Activated T-helper 1 cell treated with anti-CD3 and anti-CD28 coated beads, Interleukin-12 subunit alpha, Interleukin-12 subunit beta, Interleukin-2, Interleukin-4 antibody, amounts not matched to agents 30 ng/mL and 10 ng/mL and 1 ng/mL, durations not matched to agents 14 hours and 24 hours and 36 hours (primary cell): ENCODE measurements at regions of chr6 and their contacts with region 1.

Region 1: GRCh38 chr6:149094156-149094555 is 223.4 kb upstream of the TAB2 start:
- DNase-seq: no peak
- H3K4me3 Mint-ChIP-seq: peak overlapping the region; percentile 64
- H3K27ac Mint-ChIP-seq: peak overlapping the region; percentile 88
- H3K4me1 Mint-ChIP-seq: peaks cover 78% of the 10 kb centered on the region
- H3K27me3 Mint-ChIP-seq: no peaks in the 10 kb centered on the region

Region 2: DNA sequence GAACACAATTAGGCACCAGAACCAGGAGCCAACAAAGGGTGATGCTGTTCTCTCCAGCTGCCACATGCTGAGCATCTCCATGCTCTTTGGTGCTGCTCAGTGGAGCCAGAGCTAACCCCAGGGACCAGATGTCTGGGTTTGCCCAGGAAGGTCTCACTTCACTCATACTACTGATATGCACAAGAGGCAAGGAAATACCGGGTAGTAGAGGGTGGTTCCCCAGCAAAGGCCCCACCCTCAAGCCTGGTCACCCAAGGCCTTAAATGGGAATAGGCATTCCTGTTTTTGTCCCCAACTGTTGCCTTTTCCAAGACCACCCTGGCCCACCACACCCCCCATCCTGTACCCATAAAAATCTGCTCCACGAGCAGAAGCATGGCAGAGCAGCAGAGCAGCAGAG is 18.8 kb after region 1 on chr6:
- intact Hi-C with region 1: loop called (anchors 2 kb)
- DNase-seq: no peak
- H3K4me3 Mint-ChIP-seq: peak overlapping the region; percentile 46
- H3K27ac Mint-ChIP-seq: peak overlapping the region; percentile 89
- H3K4me1 Mint-ChIP-seq: peaks cover 92% of the 10 kb centered on the region
- H3K27me3 Mint-ChIP-seq: no peaks in the 10 kb centered on the region

Region 3: DNA sequence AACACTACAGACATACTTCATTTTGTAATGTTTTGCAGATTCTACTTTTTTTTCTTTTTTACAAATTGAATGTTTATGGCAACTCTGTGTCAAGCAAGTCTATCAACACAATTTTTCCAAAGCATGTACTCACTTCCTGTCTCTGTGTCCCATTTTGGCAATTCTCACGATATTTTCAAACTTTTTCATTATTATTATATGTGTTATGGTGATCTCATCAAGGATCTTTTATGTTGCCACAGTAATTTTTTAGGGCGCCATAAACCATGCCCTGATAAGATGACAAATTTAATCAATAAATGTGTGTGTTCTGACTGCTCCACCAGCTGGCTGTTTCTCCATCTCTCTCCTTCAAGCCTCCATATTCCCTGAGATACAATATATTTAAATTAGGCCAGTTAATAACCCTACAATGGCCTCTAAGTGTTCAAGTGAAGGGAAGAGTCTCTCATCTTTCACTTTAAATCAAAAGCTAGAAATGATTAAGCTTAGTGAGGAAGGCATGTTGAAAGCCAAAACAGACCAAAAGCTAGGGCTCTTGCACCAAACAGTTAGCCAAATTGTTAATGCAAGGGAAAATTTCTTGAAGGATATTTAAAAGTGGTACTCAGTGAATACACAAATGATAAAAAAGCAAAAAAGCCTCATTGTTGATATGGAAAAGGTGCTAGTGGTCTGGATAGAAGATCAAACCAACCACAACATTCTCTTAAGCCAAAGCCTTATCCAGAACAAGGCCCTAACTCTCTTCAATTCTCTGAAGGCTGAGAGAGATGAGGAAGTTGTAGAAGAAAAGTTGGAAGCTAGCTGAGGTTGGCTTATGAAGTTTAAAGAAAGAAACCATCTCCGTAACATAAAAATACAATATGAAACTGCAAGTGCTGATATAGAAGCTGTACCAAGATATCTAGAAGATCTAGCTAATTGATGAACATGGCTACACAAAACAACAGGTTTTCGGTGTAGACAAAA is 29.0 kb after region 1 on chr6:
- intact Hi-C with region 1: loop called (anchors 1 kb)
- DNase-seq: no peak
- H3K4me3 Mint-ChIP-seq: peak overlapping the region; percentile 48
- H3K27ac Mint-ChIP-seq: peak overlapping the region; percentile 82
- H3K4me1 Mint-ChIP-seq: peaks cover 52% of the 10 kb centered on the region
- H3K27me3 Mint-ChIP-seq: no peaks in the 10 kb centered on the region

Region 4: DNA sequence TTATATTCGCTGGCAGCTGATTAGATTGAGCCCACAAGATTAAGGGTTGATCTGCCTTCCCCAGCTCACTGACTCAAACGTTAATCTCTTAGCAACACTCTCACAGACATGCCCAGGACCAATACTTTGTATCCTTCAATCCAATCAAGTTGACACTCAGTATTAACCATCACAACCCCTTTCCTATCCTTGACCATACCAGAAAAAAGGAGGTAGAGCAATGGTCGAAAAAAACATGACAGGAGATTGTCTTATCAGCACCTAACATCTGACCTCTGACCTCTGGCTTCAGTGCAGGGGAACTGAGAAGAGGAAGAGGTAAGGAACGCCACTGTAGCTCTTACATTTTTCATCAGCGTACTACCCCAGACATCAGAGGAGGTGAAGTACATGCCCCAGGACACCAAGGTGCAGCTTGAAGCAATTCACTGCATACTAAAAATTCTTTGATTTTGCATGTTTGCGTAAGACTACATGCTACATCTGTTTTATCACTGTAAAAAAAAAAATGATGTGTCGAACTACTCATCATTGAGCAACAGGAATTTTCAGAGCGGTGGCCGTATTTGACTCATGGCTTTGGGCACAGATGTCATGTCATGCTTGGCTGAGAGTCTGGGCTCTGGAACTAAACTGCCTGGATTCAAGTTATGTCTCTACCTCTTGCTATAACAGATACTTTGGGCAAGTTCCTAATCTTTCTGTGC is 35.4 kb after region 1 on chr6:
- intact Hi-C with region 1: loop called (anchors 1 kb)
- DNase-seq: no peak
- H3K4me3 Mint-ChIP-seq: no peak overlapping the region
- H3K27ac Mint-ChIP-seq: peak overlapping the region; percentile 92
- H3K4me1 Mint-ChIP-seq: peaks cover 4% of the 10 kb centered on the region
- H3K27me3 Mint-ChIP-seq: no peaks in the 10 kb centered on the region

Region 5: GRCh38 chr6:149147938-149148718 is 54.0 kb after region 1 on chr6:
- intact Hi-C with region 1: loop called (anchors 2 kb)
- DNase-seq: peak; percentile 49
- H3K4me3 Mint-ChIP-seq: peak overlapping the region; percentile 34
- H3K27ac Mint-ChIP-seq: peak overlapping the region; percentile 96
- H3K4me1 Mint-ChIP-seq: peaks cover 89% of the 10 kb centered on the region
- H3K27me3 Mint-ChIP-seq: no peaks in the 10 kb centered on the region